Activated CD4-positive, alpha-beta T cell treated with anti-CD3 and anti-CD28 coated beads for 36 hours (primary cell): ENCODE measurements at regions of chr14 and their contacts with region 1.

Region 1: DNA sequence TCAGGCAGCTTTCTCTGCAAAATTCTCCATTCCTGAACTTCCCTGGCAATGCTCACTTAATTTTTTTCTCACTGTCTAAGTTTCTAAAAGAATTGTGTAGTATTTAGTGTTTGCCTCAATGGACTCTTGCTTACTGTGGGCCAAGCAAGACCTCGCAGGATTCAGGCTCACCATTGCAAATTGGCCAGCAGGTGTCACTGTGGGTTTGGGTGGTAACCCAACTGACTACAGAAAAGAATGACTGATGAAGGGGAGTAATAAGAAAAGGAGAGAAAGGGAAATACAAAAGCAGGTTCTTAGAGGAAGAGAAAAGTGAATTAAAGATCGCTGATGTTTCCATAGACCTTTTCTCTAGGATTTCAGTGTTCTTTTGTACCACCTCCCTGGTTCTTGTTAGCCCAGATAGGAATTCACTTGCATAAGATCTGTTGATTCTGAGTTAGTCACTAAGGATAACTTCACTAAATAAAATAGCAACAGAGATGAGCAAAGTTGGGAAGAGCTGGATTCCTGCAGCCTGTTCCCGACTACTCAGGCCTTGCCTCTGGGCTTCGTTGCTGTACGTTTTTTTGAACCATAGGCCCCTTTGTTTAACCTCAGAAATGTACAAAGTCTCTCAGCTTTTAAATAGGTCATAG is 386.5 kb upstream of the DDHD1 start:
- DNase-seq: peak; percentile 78
- ATAC-seq: no peak
- H3K4me3 Mint-ChIP-seq: no peak overlapping the region
- H3K27ac Mint-ChIP-seq: no peak overlapping the region
- H3K4me1 Mint-ChIP-seq: no peaks in the 10 kb centered on the region
- H3K27me3 Mint-ChIP-seq: peaks cover 2% of the 10 kb centered on the region

Region 2: DNA sequence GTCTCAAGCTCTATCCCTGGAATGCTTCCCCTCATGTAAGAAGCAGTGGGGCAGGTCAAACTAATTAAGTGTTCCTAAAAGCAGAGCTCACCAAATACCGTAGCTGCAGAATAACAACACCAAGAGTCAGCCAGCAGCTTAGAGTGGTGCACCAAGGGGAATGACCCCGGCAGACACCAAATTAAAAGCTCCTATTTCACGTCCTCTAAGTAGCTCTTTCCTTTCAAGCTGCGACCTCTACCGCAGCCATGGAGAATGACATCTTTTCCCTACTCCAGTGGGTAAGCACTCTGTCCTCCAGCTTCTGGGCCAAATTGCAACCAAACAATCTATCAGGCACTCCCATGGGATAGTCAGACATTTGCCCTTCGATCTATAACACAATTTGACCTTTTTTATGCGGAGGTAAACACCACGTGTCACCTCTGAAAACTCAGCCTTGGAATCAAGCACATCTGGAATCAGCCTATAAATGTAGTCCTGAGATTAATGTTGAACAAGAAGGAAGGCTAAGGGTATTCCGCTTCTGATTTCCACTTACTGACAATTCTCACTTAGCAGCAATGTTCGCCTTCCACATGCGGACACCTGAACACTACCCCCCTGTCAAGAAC is 789.6 kb after region 1 on chr14:
- CTCF ChIA-PET with region 1: interaction called, 5 read pairs
- POLR2A ChIA-PET with region 1: no interaction called
- intact Hi-C with region 1: loop called in 1 of 2 experiments (anchors 5 kb)
- DNase-seq: peak; percentile 43
- ATAC-seq: no peak
- H3K4me3 Mint-ChIP-seq: no peak overlapping the region
- H3K27ac Mint-ChIP-seq: no peak overlapping the region
- H3K4me1 Mint-ChIP-seq: no peaks in the 10 kb centered on the region
- H3K27me3 Mint-ChIP-seq: peaks cover 29% of the 10 kb centered on the region